ENCODE measurements at regions of chr4 and their contacts with region 1.

Region 1: GRCh38 chr4:34771632-34772031 is 1472.7 kb downstream of the ARAP2 start:
- DNase-seq: no peak
- ATAC-seq: no peak
- H3K4me3 ChIP-seq: no peak overlapping the region
- H3K27ac ChIP-seq: no peak overlapping the region
- H3K4me1 ChIP-seq: no peaks in the 10 kb centered on the region
- H3K27me3 ChIP-seq: no peaks in the 10 kb centered on the region
- CTCF ChIP-seq: no peak

Region 2: GRCh38 chr4:34649716-34650115 is 121.9 kb before region 1 on chr4:
- intact Hi-C with region 1: no loop called
- DNase-seq: no peak
- ATAC-seq: no peak
- H3K4me3 ChIP-seq: no peak overlapping the region
- H3K27ac ChIP-seq: no peak overlapping the region
- H3K4me1 ChIP-seq: no peaks in the 10 kb centered on the region
- H3K27me3 ChIP-seq: no peaks in the 10 kb centered on the region
- CTCF ChIP-seq: no peak

Region 3: DNA sequence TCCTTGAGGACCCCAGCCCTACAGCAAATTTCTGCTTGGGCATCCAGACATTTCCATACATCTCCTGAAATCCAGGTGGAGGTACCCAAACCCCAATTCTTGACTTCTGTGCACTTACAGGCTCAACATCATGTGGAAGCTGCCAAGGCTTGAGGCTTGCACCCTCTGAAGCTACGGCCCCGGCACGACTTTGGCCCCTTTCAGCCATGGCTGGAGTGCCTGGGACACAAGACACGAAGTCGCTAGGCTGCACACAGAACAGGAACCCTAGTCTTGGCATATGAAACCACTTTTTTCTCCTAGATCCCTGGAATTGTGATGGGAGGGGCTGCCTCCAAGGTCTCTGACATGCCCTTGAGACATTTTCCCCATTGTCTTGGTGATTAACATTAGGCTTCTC is 55.0 kb after region 1 on chr4:
- intact Hi-C with region 1: loop called (anchors 2 kb)
- DNase-seq: no peak
- ATAC-seq: no peak
- H3K4me3 ChIP-seq: no peak overlapping the region
- H3K27ac ChIP-seq: no peak overlapping the region
- H3K4me1 ChIP-seq: no peaks in the 10 kb centered on the region
- H3K27me3 ChIP-seq: no peaks in the 10 kb centered on the region
- CTCF ChIP-seq: no peak

Region 4: GRCh38 chr4:35038081-35038805 is 266.6 kb after region 1 on chr4:
- intact Hi-C with region 1: no loop called
- DNase-seq: no peak
- ATAC-seq: peak; percentile 16 to 55
- H3K4me3 ChIP-seq: no peak overlapping the region
- H3K27ac ChIP-seq: no peak overlapping the region
- H3K4me1 ChIP-seq: no peaks in the 10 kb centered on the region
- H3K27me3 ChIP-seq: no peaks in the 10 kb centered on the region
- CTCF ChIP-seq: no peak

Region 5: GRCh38 chr4:35591035-35591434 is 819.4 kb after region 1 on chr4:
- intact Hi-C with region 1: no loop called
- DNase-seq: no peak
- ATAC-seq: no peak
- H3K4me3 ChIP-seq: no peak overlapping the region
- H3K27ac ChIP-seq: no peak overlapping the region
- H3K4me1 ChIP-seq: no peaks in the 10 kb centered on the region
- H3K27me3 ChIP-seq: no peaks in the 10 kb centered on the region
- CTCF ChIP-seq: no peak

Measured in lower lobe of right lung (tissue), 2 donors.